ENCODE measurements at regions of chr20 and their contacts with region 1.

Region 1: DNA sequence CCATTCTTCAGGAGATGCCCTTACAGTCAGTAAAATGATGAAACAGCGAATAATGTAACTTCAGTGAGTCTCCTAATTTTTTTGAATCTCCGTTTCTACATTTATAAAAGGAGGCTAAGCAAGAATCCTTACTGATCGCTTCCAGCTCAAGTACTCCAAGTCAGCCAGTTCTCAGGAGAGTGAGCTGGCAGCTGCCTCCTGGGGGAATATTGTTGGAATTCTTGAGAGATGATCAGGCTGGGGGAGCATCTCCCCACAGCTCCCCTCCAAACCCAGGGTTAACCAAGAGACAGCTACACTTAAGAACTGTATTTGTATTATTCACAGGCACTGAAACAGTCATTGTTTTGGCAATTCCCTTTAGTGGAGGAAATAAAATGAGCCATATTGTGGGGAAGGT is 89.1 kb upstream of the PCSK2 start:
- DNase-seq: no peak
- H3K4me3 ChIP-seq: no peak overlapping the region
- H3K27ac ChIP-seq: no peak overlapping the region
- H3K4me1 ChIP-seq: no peaks in the 10 kb centered on the region
- H3K27me3 ChIP-seq: no peaks in the 10 kb centered on the region
- CTCF ChIP-seq: no peak
- POLR2A ChIP-seq: no peak

Region 2: DNA sequence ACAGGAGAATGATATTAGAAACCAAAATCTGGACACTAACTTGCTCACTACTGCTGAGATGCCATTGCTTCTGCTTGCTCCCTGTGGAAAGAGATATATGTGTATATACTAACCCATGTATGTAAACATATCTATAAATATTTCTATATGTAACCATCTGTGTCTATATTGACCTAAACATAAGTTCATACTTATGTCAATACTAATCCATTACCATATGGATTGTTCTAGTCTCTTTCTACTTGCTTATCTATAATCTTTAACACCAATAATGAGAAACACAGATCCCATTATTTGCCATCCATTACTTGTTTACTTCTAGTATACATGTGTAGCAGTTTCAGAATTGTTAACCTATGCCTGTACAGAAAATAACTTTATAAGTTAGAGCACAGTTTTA is 24.3 kb before region 1 on chr20:
- intact Hi-C with region 1: no loop called
- DNase-seq: no peak
- H3K4me3 ChIP-seq: no peak overlapping the region
- H3K27ac ChIP-seq: no peak overlapping the region
- H3K4me1 ChIP-seq: no peaks in the 10 kb centered on the region
- H3K27me3 ChIP-seq: no peaks in the 10 kb centered on the region
- CTCF ChIP-seq: no peak
- POLR2A ChIP-seq: no peak

Region 3: GRCh38 chr20:17158701-17159100 is 21.0 kb after region 1 on chr20:
- intact Hi-C with region 1: loop called (anchors 2 kb)
- DNase-seq: no peak
- H3K4me3 ChIP-seq: no peak overlapping the region
- H3K27ac ChIP-seq: no peak overlapping the region
- H3K4me1 ChIP-seq: no peaks in the 10 kb centered on the region
- H3K27me3 ChIP-seq: no peaks in the 10 kb centered on the region
- CTCF ChIP-seq: no peak
- POLR2A ChIP-seq: no peak

Region 4: GRCh38 chr20:18324596-18325089 is 1187.0 kb after region 1 on chr20:
- intact Hi-C with region 1: no loop called
- DNase-seq: no peak
- H3K4me3 ChIP-seq: no peak overlapping the region
- H3K27ac ChIP-seq: no peak overlapping the region
- H3K4me1 ChIP-seq: no peaks in the 10 kb centered on the region
- H3K27me3 ChIP-seq: no peaks in the 10 kb centered on the region
- CTCF ChIP-seq: no peak
- POLR2A ChIP-seq: no peak